Cardiac septum (tissue), 1 donor: ENCODE measurements at regions of chr12 and their contacts with region 1.

Region 1: GRCh38 chr12:27523642-27524493 is at the start of gene PPFIBP1:
- DNase-seq: peak; percentile 100
- total RNA-seq, gene PPFIBP1: 219 TPM

Region 2: DNA sequence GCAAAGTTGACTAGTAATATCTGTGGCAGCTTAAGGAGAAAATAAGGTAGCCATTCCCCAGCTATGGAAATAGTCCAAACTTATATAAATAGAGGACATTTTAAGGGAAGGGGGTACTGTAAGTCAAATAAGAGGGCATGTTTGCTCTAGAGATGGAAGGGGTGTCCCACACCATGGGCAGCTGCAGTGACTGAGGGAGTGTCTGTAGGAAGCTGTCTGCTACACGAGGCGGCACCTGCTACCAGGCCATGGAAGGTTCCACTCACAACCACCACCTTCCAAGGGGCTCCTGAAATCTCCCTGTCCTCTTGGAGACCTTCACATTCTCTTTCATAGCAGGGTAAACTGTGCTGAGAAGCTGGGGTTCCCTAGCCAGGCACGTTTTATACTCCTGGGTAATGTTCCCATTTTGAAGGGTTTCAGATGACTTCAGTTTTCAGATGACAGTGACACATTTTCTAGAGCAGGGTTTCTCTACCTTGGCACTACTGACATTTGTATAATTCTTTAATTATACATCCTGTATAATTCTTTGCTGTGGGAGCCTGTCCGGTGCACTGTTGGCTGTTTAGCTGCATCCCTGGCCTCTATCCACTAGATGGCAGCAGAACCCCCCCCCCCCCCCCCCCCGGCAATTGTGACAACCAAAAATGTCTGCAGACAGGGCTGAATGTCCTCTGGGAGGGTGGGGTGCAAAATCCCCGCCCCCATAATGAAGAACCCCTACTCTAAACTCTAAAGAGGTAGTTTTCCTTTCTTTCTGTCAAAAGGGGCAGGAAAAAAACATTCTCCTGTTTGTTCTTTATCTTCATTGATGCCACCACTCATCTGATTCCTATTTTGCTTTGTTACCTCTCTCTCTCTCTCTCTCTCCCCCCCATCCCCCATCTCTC is 88.9 kb before region 1 on chr12:
- intact Hi-C with region 1: loop called (anchors 5 kb)
- DNase-seq: no peak

Region 3: DNA sequence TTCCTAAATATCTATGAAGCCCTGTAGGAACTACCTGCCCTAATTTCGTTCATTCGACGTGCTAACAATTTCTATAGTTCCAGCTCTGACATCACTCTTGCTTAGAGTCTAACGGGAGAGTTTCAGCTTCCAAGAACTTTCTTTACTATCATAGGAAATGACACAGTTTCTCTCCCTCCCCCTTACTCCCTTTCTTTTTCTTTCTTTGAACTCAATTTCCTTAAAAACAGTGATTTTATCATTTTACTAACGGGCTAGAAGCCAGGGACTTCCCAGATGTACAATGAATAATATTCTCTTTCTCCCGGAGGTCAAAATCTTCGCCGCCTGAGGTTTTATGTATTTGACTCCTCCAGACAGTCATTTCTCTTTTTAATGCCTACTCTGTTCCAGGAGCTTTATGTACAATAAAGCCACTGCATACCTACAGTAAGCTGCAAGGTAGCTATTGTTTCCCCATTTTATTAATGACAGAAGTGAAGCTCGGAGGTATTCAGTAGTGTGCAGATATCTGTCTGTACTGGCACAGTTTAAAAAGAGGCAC is 61.6 kb before region 1 on chr12:
- intact Hi-C with region 1: loop called (anchors 5 kb)
- DNase-seq: no peak

Region 4: DNA sequence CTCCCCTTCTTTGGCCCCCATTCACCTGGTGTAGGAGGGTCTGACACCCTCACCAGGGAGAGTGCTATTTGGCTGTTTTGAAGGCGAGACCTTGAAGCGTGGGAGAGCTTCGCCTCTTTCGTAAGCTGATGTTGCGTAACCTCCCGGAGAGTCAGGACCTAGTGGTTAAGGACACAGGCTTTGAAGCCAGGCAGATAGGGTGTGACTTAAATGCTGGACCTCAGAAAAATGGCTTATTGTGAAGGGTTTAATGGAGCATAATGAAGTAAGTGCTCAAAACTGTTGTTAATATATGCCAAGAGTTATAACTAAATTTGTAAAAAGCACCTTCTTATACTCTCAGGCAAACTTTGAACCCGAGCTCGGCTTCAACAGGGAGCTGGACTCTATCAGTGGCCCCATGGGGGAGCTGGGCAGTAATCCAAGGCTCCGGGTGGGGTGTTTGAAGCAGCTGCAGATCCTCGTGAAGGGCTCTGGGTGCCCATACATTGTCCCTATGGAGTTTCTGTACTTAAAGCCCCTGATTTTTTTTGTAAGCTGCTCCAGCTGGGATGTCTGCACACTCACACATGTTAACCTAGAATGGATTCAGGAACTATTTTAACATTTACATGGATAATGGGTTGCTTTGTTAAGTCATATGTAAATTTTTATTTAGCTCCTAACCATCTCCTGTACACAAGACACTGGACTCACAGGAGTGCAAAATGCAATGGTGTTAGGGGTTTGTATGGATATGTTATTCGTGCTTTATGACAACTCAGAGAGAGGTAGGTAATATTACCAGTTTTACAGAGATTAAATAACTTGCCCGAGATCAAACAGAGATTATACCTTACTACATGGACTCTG is 26.2 kb after region 1 on chr12:
- intact Hi-C with region 1: loop called (anchors 2 kb)
- DNase-seq: peak; percentile 88

Region 5: GRCh38 chr12:27573972-27574371 is 50.1 kb after region 1 on chr12:
- intact Hi-C with region 1: loop called (anchors 10 kb)
- DNase-seq: no peak

Region 6: DNA sequence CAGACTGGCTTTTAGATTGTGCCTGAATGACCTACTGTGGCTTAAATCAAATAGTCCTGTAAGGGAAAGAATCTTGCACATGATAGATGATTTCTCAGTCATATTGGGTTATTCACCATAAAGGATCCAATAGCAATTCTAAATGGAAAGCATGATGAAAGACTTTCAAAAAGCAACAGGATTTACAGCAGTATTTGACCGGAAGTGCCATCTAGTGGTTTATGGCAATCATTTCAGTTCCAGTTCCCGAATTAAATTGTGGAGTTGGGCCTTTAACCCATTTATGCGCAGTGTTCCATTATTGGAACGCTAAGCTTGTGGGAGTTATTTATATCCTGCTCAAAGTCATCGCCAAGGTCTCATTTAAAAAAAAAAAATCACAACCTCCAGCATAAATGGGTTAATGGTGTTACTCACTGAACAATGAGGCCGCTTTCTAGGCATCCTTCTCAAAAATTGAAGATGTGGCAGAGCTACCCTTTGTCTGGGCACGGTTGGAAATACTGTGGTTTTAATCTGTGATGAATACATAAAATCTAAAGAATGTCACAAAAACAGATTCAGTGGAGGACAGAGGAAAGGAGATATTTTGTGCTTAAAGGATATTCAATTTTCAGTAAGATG is 111.6 kb after region 1 on chr12:
- intact Hi-C with region 1: loop called (anchors 2 kb)
- DNase-seq: no peak